Right ventricle myocardium inferior (tissue), 1 donor: ENCODE measurements at regions of chr18 and their contacts with region 1.

Region 1: GRCh38 chr18:65725251-65726050 is 25.4 kb upstream of the CDH7 start:
- DNase-seq: no peak
- ATAC-seq: no peak

Region 2: GRCh38 chr18:66495844-66496243 is 770.4 kb after region 1 on chr18:
- intact Hi-C with region 1: loop called (anchors 5 kb)
- DNase-seq: no peak
- ATAC-seq: no peak

Region 3: DNA sequence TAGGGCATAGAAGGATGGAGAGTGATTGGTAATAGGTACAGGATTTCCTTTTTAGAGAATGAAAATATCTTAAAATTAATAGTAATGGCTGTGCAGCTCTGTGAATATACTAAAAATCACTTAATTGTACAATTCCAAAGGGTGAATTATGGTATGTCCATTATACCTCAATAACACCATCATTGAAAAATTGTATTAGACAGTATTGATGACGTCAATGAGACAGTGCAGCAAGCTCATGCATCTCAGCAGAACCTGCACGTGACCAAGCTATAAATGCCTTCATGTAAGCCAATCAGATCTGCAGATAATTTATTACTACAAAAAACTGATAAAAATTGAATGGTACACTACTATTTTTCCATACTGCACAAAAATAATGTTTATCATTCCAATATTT is 1232.9 kb after region 1 on chr18:
- intact Hi-C with region 1: no loop called
- DNase-seq: no peak
- ATAC-seq: no peak